ENCODE measurements at regions of chrX and their contacts with region 1.

Region 1: GRCh38 chrX:96182366-96182765 is 502.3 kb upstream of the DIAPH2 start:
- DNase-seq: peak; percentile 55
- H3K4me3 ChIP-seq: no peak overlapping the region
- H3K27ac ChIP-seq: no peak overlapping the region
- H3K4me1 ChIP-seq: no peaks in the 10 kb centered on the region
- H3K27me3 ChIP-seq: no peaks in the 10 kb centered on the region
- CTCF ChIP-seq: peak; percentile 53 to 64
- POLR2A ChIP-seq: no peak

Region 2: DNA sequence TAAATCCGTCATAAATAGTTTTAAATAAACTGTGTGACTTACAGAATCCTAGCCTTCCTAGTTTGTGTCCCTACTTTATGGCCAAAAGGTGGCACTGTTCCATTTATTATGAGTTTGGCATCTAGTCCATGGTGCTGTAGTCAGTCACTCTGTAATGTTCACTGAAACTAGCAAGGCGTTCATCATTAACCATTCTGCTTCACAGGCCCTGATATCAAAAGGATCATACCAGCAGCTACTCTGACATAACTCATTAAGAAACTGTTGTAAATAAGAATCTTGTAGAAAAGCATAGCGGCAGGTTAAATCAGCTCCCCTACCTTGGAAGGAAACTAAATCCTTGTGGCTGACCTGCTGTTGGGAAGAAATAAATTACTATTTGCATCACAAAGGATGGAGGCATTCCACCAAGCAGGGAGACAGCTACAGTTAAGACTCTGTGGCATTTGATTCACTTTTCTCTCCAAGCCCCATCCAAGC is 417.4 kb before region 1 on chrX:
- CTCF ChIA-PET with region 1: interaction called, 51 read pairs
- POLR2A ChIA-PET with region 1: no interaction called
- dilution Hi-C with region 1: no loop called
- intact Hi-C with region 1: loop called (anchors 1 kb)
- DNase-seq: peak; percentile 49
- H3K4me3 ChIP-seq: no peak overlapping the region
- H3K27ac ChIP-seq: no peak overlapping the region
- H3K4me1 ChIP-seq: no peaks in the 10 kb centered on the region
- H3K27me3 ChIP-seq: no peaks in the 10 kb centered on the region
- CTCF ChIP-seq: peak; percentile 11 to 25
- POLR2A ChIP-seq: no peak

Region 3: GRCh38 chrX:95974096-95974470 is 208.3 kb before region 1 on chrX:
- CTCF ChIA-PET with region 1: no interaction called
- POLR2A ChIA-PET with region 1: no interaction called
- dilution Hi-C with region 1: no loop called
- intact Hi-C with region 1: loop called (anchors 5 kb)
- DNase-seq: no peak
- H3K4me3 ChIP-seq: no peak overlapping the region
- H3K27ac ChIP-seq: no peak overlapping the region
- H3K4me1 ChIP-seq: no peaks in the 10 kb centered on the region
- H3K27me3 ChIP-seq: no peaks in the 10 kb centered on the region
- CTCF ChIP-seq: no peak
- POLR2A ChIP-seq: no peak

Region 4: GRCh38 chrX:97234471-97235081 is 1052.2 kb after region 1 on chrX:
- CTCF ChIA-PET with region 1: no interaction called
- POLR2A ChIA-PET with region 1: no interaction called
- dilution Hi-C with region 1: no loop called
- intact Hi-C with region 1: no loop called
- DNase-seq: no peak
- H3K4me3 ChIP-seq: no peak overlapping the region
- H3K27ac ChIP-seq: no peak overlapping the region
- H3K4me1 ChIP-seq: peaks cover 11% of the 10 kb centered on the region
- H3K27me3 ChIP-seq: no peaks in the 10 kb centered on the region
- CTCF ChIP-seq: no peak
- POLR2A ChIP-seq: no peak